Activated CD8-positive, alpha-beta T cell treated with anti-CD3 and anti-CD28 coated beads for 36 hours (primary cell): ENCODE measurements at regions of chr22 and their contacts with region 1.

Region 1: DNA sequence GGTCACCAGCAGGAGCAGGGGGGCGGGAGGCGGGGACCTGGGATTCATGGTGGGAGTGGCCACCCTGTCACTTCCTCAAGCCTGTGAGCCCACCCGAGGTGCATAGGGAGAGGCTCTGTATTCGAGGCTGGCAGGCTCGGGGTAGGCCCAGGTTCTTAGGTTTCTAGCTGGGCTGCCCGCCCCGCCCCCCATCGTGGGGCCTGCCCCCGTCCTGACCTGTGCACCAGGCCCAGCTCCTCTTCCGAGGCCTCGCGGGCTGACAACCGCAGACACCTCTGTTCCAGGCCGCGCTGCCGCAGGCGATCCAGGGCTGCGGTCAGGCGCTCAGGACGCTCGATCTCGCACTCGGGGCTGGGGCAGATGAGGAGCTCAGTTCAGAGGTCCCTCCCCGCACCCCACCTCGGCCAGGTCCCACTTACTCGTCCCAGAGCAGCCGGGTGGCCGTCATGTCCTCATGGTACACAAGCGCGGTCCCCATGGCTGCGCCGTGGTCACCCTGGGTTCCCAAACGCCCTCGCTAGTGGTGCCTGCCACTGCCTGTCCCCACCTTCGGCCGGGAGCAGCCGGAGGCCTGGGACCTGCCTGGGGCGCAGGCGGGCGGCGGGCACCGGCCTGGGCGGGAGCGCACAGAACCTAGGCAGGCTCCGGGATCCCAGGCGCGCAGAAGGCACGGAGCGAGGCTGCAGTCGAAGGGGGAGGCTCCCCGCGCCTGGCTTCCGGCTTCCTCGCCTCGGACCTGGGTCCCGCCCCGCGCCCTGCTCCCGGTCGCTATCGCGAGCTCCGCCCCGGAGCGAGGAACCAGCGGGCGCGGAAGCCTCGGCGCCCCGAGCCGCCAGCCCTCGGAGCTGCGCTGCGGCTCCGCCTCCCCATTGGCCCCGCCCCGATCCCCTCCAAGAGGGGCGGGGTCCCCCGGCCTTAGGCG is at the start of gene HDAC10:
- DNase-seq: peak; percentile 90
- ATAC-seq: peak; percentile 89
- H3K4me3 Mint-ChIP-seq: peak within 1 kb of the TSS; percentile 85
- H3K27ac Mint-ChIP-seq: peak within 1 kb of the TSS; percentile 81
- H3K4me1 Mint-ChIP-seq: peaks cover 15% of the 10 kb centered on the region
- H3K27me3 Mint-ChIP-seq: no peaks in the 10 kb centered on the region
- CTCF ChIP-seq: no peak
- total RNA-seq, gene HDAC10: 43.0 to 44.3 TPM

Region 2: GRCh38 chr22:50269970-50270665 is 19.3 kb after region 1 on chr22 and contains the start of gene MAPK11:
- CTCF ChIA-PET with region 1: interaction called, 22 read pairs
- POLR2A ChIA-PET with region 1: interaction called, 13 read pairs
- intact Hi-C with region 1: no loop called
- DNase-seq: peak; percentile 76
- ATAC-seq: peak; percentile 67
- H3K4me3 Mint-ChIP-seq: peak within 1 kb of the TSS; percentile 66
- H3K27ac Mint-ChIP-seq: no peak within 1 kb of the TSS
- H3K4me1 Mint-ChIP-seq: peaks cover 8% of the 10 kb centered on the region
- H3K27me3 Mint-ChIP-seq: peaks cover 10% of the 10 kb centered on the region
- CTCF ChIP-seq: no peak
- total RNA-seq, gene MAPK11: 5.9 to 6.2 TPM

Region 3: DNA sequence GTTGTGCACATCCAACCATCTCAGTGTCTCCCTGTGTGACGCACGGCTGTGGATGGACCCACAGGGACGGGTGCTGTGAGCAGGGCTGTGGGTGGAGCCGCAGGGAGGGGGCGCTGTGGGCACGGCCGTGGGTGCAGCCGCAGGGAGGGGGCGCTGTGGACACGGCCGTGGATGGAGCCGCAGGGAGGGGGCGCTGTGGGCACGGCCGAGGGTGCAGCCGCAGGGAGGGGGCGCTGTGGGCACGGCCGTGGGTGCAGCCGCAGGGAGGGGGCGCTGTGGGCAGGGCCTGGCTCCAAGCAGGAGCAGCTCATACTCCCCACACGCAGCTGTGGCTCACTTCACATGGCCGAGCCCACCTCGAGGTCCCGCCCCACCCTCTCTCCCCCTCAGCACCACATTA is 25.3 kb after region 1 on chr22:
- CTCF ChIA-PET with region 1: interaction called, 12 read pairs
- POLR2A ChIA-PET with region 1: interaction called, 13 read pairs
- intact Hi-C with region 1: no loop called
- DNase-seq: peak; percentile 67
- ATAC-seq: peak; percentile 80
- H3K4me3 Mint-ChIP-seq: no peak overlapping the region
- H3K27ac Mint-ChIP-seq: no peak overlapping the region
- H3K4me1 Mint-ChIP-seq: peaks cover 1% of the 10 kb centered on the region
- H3K27me3 Mint-ChIP-seq: peaks cover 8% of the 10 kb centered on the region
- CTCF ChIP-seq: peak; percentile 70

Region 4: DNA sequence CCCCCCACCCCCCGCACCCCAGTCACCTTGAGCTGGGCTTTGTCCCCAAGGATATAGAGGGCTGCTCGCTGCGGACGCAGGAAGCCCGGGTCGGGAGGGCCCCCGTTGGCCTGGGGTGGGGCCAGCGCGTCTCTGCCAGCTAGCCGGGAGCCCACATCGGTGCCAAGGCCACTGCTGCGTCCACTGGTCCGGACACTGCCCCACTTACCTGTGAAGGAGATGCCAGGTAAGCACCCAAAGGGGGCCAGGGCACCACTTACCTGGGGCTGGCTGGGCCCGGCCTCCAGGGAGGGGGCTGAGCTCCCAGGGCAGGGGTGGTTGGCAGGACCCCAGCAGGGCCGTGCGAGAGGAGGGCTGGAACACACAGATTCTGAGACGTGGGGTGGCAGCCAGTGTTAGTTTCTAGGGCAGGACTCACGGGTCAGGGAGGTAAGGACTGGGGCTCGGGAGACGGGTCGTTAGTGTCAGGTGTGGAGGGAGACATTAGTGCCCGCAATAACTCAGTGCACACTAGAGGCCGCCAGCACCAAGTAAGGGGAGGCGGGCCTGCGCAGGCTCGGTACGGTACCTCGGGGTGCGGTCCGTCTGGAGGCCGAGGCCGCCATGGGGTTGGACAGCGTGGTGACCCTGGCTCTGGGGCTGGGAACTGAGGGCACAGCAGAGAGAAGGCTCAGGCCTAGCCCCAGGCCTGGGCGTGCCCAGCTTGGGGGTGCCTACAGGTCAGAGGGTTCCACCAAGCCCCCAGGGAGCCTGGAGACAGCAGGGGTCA is 205.8 kb after region 1 on chr22:
- CTCF ChIA-PET with region 1: no interaction called
- POLR2A ChIA-PET with region 1: no interaction called
- intact Hi-C with region 1: no loop called
- DNase-seq: peak; percentile 32
- ATAC-seq: peak; percentile 46
- H3K4me3 Mint-ChIP-seq: no peak overlapping the region
- H3K27ac Mint-ChIP-seq: no peak overlapping the region
- H3K4me1 Mint-ChIP-seq: peaks cover 14% of the 10 kb centered on the region
- H3K27me3 Mint-ChIP-seq: no peaks in the 10 kb centered on the region
- CTCF ChIP-seq: peak; percentile 37